Mammary epithelial cell (primary cell): ENCODE measurements at regions of chr11 and their contacts with region 1.

Region 1: GRCh38 chr11:83071567-83072349 is at the start of gene RAB30:
- DNase-seq: peak; percentile 100
- H3K4me3 ChIP-seq: peak within 1 kb of the TSS; percentile 83 to 92 (median 88)
- H3K27ac ChIP-seq: peak within 1 kb of the TSS; percentile 90
- H3K4me1 ChIP-seq: peaks cover 21% of the 10 kb centered on the region
- H3K27me3 ChIP-seq: no peaks in the 10 kb centered on the region
- CTCF ChIP-seq: no peak
- total RNA-seq, gene RAB30: 10.6 to 41.7 TPM

Region 2: DNA sequence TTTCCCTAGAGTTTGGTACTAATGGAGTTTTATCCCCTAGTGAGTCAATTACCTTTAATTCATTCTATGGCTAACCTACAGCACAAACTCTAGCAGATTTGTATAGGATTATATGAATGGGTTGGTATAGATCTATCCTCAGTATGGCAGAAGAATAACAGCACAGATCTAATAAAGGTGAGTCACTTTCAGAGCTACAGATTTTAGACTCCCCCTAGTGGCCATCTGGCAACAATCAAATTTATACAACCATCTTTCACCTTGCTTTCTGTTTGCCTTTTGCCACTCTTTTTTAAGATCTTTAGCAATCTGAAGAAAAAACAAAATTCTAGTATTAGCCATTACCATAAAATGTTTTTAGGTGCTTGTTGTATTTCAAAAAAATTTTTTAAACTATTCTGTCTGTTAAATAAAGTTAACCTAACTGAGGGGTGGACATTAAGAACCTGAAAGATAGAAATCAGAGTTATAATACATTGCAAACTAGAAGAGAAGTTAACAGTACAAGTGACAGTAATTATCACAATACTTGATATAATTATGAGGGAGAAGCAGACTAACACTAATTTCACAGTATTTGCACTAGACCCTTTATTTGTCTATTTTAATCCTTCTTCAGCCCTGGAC is 144.4 kb before region 1 on chr11:
- CTCF ChIA-PET with region 1: no interaction called
- dilution Hi-C with region 1: no loop called
- in situ Hi-C with region 1: no loop called
- intact Hi-C with region 1: loop called (anchors 1 kb)
- DNase-seq: peak; percentile 45
- H3K4me3 ChIP-seq: no peak overlapping the region
- H3K27ac ChIP-seq: no peak overlapping the region
- H3K4me1 ChIP-seq: no peaks in the 10 kb centered on the region
- H3K27me3 ChIP-seq: no peaks in the 10 kb centered on the region
- CTCF ChIP-seq: peak; percentile 82 to 83

Region 3: DNA sequence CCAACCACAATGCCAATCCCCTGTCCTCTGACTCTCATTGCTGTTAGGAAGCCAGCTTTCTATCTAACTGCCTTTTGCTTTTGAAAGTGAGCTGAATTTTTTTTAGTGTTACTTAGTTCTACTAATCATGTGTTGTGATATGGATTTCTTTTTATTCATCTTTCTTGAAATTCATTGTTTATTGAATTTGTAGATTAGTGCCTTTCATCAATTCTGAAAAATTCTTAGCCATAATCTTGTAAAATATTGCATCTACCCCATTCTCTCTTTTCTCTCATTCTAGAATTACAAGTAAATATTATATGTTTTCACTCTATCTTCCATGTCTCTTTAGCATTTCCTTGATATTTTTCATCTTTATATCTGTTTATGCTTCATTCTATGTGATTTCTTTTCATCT is 122.4 kb before region 1 on chr11:
- CTCF ChIA-PET with region 1: no interaction called
- dilution Hi-C with region 1: no loop called
- in situ Hi-C with region 1: no loop called
- intact Hi-C with region 1: no loop called
- DNase-seq: no peak
- H3K4me3 ChIP-seq: no peak overlapping the region
- H3K27ac ChIP-seq: no peak overlapping the region
- H3K4me1 ChIP-seq: no peaks in the 10 kb centered on the region
- H3K27me3 ChIP-seq: no peaks in the 10 kb centered on the region
- CTCF ChIP-seq: no peak

Region 4: GRCh38 chr11:82980292-82980691 is 91.5 kb before region 1 on chr11:
- CTCF ChIA-PET with region 1: no interaction called
- dilution Hi-C with region 1: no loop called
- in situ Hi-C with region 1: no loop called
- intact Hi-C with region 1: loop called (anchors 5 kb)
- DNase-seq: peak; percentile 80
- H3K4me3 ChIP-seq: no peak overlapping the region
- H3K27ac ChIP-seq: peak overlapping the region; percentile 75
- H3K4me1 ChIP-seq: peaks cover 28% of the 10 kb centered on the region
- H3K27me3 ChIP-seq: no peaks in the 10 kb centered on the region
- CTCF ChIP-seq: no peak

Region 5: GRCh38 chr11:82996966-82997606 is 74.7 kb before region 1 on chr11:
- CTCF ChIA-PET with region 1: no interaction called
- dilution Hi-C with region 1: no loop called
- in situ Hi-C with region 1: no loop called
- intact Hi-C with region 1: loop called (anchors 1 kb)
- DNase-seq: peak; percentile 24
- H3K4me3 ChIP-seq: no peak overlapping the region
- H3K27ac ChIP-seq: no peak overlapping the region
- H3K4me1 ChIP-seq: peaks cover 3% of the 10 kb centered on the region
- H3K27me3 ChIP-seq: no peaks in the 10 kb centered on the region
- CTCF ChIP-seq: no peak

Region 6: DNA sequence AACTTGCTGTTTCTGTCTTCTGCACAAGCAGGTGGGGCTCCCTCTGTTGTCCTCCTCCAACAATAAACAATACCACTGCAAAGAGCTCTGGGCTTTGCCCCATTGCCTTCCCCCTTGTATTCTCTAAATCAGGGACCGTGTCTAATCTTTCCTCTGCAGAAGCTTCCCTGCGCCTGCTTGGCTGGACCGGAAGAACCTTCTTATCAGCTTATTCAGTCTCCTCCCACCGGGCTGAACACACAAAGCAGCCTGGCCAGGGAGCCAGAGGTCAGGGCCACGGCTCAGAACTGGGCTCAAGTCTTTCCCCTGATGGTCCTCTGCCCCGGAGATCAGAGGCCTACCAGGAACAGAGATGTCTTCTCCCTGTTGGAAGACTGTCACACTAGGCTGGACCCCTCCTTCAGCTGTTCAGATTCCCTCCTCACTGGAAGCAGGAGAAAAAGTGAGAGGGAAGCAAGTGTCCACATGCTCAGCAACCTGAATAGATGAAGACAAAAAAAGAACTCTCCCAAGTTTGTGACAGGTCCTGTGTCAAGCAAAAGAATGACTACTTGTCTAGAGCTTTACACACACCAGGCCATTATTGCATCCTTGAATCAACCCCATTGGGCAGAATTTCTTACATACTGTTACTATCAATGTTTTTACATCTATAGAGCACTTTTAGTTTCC is 63.7 kb before region 1 on chr11:
- CTCF ChIA-PET with region 1: no interaction called
- dilution Hi-C with region 1: no loop called
- in situ Hi-C with region 1: no loop called
- intact Hi-C with region 1: no loop called
- DNase-seq: no peak
- H3K4me3 ChIP-seq: no peak overlapping the region
- H3K27ac ChIP-seq: no peak overlapping the region
- H3K4me1 ChIP-seq: no peaks in the 10 kb centered on the region
- H3K27me3 ChIP-seq: no peaks in the 10 kb centered on the region
- CTCF ChIP-seq: no peak

Region 7: DNA sequence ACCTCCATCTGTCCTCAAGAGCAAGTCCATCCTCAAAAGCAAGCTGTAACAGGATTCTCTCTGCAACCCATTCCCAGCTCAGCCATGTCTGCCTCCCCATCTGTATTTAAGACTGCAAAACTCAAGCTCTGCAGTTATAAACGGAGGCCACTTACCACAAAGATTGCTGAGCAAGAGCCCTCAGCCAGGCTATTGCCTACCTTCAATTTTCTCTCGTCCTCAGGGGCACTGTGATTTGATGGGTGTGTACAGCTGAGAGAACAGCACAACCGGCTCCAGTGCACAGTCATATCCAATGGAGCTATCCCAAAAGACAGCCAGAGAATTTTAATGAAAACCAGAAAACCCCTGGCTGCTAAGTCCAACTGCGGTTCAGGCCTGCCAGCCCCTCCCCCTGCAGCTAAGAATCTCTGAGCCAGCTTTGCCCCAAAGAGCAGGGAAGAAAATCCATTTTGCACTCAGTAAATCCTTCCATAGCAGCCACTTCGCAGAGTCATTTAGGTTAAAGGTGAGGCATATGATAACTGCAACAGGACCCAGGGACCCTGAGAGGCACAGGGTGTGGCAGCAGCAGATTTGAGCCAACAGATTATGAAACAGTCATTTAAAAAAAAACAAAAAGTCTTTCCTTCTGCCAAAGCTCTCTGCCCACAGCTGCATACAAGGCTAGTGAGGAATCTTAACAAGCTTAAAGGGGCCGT is 37.6 kb before region 1 on chr11:
- CTCF ChIA-PET with region 1: interaction called, 3 read pairs
- dilution Hi-C with region 1: no loop called
- in situ Hi-C with region 1: no loop called
- intact Hi-C with region 1: loop called (anchors 2 kb)
- DNase-seq: peak; percentile 43
- H3K4me3 ChIP-seq: peak overlapping the region in 1 of 3 experiments; percentile 34
- H3K27ac ChIP-seq: peak overlapping the region; percentile 5
- H3K4me1 ChIP-seq: peaks cover 26% of the 10 kb centered on the region
- H3K27me3 ChIP-seq: no peaks in the 10 kb centered on the region
- CTCF ChIP-seq: no peak

Region 8: GRCh38 chr11:83051760-83052671 is 19.7 kb before region 1 on chr11:
- CTCF ChIA-PET with region 1: no interaction called
- dilution Hi-C with region 1: no loop called
- in situ Hi-C with region 1: no loop called
- intact Hi-C with region 1: loop called (anchors 1 kb)
- DNase-seq: peak; percentile 81
- H3K4me3 ChIP-seq: no peak overlapping the region
- H3K27ac ChIP-seq: peak overlapping the region; percentile 60
- H3K4me1 ChIP-seq: peaks cover 39% of the 10 kb centered on the region
- H3K27me3 ChIP-seq: no peaks in the 10 kb centered on the region
- CTCF ChIP-seq: no peak

Region 9: DNA sequence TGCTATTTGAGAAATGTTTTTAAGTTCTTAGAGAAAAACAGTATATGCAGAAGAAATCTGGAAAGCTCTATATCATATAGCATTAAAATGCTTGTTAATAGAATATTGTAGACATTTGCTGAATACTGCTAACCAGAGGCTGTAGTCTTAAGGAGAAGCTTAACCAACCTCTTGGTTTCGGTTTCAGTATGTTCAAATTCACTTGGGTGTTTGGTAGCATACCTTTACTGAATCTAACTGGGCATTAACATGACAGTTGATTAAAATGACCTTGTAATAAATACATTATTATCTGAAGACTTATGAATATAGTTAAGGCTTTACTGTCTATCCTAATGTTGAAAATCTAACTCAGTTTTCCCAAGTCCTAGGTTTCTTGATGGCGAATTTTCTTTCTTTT is 90.6 kb after region 1 on chr11:
- CTCF ChIA-PET with region 1: no interaction called
- dilution Hi-C with region 1: loop called (anchors 5 kb)
- in situ Hi-C with region 1: no loop called
- intact Hi-C with region 1: loop called (anchors 1 kb)
- DNase-seq: no peak
- H3K4me3 ChIP-seq: no peak overlapping the region
- H3K27ac ChIP-seq: no peak overlapping the region
- H3K4me1 ChIP-seq: peaks cover 14% of the 10 kb centered on the region
- H3K27me3 ChIP-seq: no peaks in the 10 kb centered on the region
- CTCF ChIP-seq: no peak